AG04450 (cell line): ENCODE measurements at regions of chr10 and their contacts with region 1.

Region 1: GRCh38 chr10:101050208-101051069 is 11.3 kb upstream of the KAZALD1 start:
- DNase-seq: no peak
- H3K4me3 ChIP-seq: peak overlapping the region; percentile 39
- H3K27ac ChIP-seq: peak overlapping the region; percentile 11
- H3K27me3 ChIP-seq: peaks cover 17% of the 10 kb centered on the region
- CTCF ChIP-seq: peak; percentile 85

Region 2: DNA sequence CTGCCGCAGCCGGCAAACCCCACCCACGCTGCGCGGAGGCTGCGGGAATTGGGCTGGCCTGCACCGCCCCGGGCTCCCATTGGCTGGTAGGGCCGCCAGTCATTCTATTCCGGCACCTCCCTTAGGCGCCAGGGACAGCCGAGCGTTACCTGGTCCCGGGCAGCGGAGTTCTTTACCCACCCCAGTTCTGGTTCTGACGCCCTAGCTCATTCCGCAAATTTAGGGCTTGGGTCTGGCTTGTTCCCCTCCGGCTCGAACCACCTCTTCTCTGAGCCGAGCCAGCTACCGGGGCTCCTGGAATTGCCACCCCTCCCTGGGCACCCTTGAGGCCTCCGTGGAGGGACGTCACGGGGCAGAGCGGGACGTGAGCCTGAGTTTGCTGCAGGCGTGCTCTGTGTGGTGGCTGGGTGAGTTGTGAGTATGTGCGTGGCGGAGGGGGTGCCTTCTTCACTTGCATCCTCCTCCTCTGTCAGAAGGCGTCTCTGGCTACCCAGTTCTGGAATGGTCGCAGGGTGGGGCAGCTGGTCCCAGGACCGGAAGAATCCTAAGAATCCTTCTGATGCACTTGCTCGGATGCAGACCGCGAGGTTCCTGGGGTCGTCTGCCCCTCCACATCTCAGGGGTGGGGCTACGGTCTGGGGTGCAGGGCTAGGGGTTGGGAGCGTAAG is 19.2 kb before region 1 on chr10 and contains the starts of genes PDZD7 and SFXN3:
- CTCF ChIA-PET with region 1: interaction called, 19 read pairs
- POLR2A ChIA-PET with region 1: no interaction called
- DNase-seq: peak; percentile 83
- H3K4me3 ChIP-seq: peak within 1 kb of the TSS; percentile 96
- H3K27ac ChIP-seq: peak within 1 kb of the TSS; percentile 99
- H3K27me3 ChIP-seq: no peaks in the 10 kb centered on the region
- CTCF ChIP-seq: no peak
- polyA plus RNA-seq, gene PDZD7: 0.27 and 0.60 TPM in 2 replicates
- polyA plus RNA-seq, gene SFXN3: 77.8 and 87.0 TPM in 2 replicates